ENCODE measurements at regions of chr5 and their contacts with region 1.

Region 1: DNA sequence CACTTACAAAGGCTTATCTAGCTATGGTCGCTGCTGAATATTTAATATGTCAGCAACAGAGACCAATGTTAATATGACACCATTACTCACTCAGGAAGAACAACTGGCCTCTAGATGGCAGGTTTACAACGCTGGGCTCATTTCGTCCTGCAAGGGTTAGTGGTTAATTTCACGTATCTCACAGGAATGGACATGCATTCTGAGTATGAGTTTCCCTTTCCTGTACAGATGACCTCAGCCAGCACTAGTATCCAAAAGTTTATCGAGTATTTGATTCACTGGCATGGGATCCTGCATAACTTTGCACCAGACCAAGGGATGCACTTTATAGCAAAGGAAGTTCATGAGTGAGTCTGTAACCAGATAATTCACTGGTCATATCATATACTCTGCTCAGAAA is 8.7 kb upstream of the TRPC7 start:
- DNase-seq: no peak
- H3K4me3 ChIP-seq: no peak overlapping the region
- H3K27ac ChIP-seq: no peak overlapping the region
- H3K4me1 ChIP-seq: no peaks in the 10 kb centered on the region
- H3K27me3 ChIP-seq: no peaks in the 10 kb centered on the region
- CTCF ChIP-seq: peak in 2 of 3 experiments; percentile 66 to 77; a peak in 3 of 4 replicates
- EP300 ChIP-seq: no peak
- POLR2A ChIP-seq: no peak
- RAD21 ChIP-seq: peak; percentile 82 to 89

Region 2: DNA sequence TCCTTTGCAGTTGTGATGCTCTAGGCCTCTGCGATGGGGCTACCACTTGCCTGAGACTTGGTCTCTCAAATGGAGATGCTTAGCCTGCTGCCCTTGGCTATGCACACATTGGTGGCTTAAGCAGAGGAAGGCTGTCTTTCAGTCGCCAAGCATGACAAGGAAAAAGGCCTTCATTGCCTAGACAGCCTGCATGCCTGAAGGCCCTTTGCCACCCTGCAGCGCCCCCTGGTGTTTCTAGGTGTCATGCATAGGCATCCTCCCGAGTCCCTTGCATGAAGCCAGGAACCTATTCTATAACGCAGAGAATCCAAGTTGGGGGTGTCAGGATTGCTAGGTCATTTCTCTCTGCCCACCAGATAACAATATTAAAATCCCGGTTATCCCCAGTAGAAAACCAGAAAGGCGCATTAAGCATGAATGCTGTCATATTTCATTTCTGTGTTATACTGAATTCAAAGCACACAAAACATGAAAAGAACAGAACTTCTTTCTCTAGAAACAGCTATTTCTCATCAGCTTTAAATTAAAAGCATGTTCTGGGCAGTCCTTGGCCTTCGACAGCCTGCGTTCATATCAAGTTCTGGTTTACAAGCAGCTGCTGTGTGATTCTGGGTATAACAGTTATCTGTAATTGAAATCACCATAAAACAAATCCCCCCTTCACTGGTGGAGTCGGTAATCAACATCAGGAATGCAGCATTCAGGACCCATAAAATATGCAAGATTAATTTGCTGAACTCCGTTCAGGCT is 51.0 kb after region 1 on chr5:
- CTCF ChIA-PET with region 1: interaction called, 14 read pairs
- POLR2A ChIA-PET with region 1: no interaction called
- DNase-seq: peak; percentile 58 to 97
- H3K4me3 ChIP-seq: no peak overlapping the region
- H3K27ac ChIP-seq: no peak overlapping the region
- H3K4me1 ChIP-seq: peaks cover 0 to 4% (median under 1%) of the 10 kb centered on the region in 4 experiments; a peak in 4 of 7 replicates
- H3K27me3 ChIP-seq: no peaks in the 10 kb centered on the region; a peak in 2 of 7 replicates
- CTCF ChIP-seq: peak; percentile 83 to 92 (median 86)
- EP300 ChIP-seq: no peak
- POLR2A ChIP-seq: no peak
- RAD21 ChIP-seq: peak; percentile 92 to 96

Region 3: GRCh38 chr5:136686192-136686872 is 312.3 kb after region 1 on chr5:
- CTCF ChIA-PET with region 1: interaction called, 16 read pairs
- POLR2A ChIA-PET with region 1: no interaction called
- DNase-seq: peak in 1 of 2 experiments; percentile 49
- H3K4me3 ChIP-seq: no peak overlapping the region
- H3K27ac ChIP-seq: no peak overlapping the region
- H3K4me1 ChIP-seq: no peaks in the 10 kb centered on the region
- H3K27me3 ChIP-seq: no peaks in the 10 kb centered on the region; a peak in 1 of 7 replicates
- CTCF ChIP-seq: peak in 2 of 3 experiments; percentile 65 to 67; a peak in 3 of 4 replicates
- EP300 ChIP-seq: no peak
- POLR2A ChIP-seq: no peak
- RAD21 ChIP-seq: peak; percentile 80 to 85